ENCODE measurements at regions of chr4 and their contacts with region 1.

Region 1: GRCh38 chr4:26459054-26459755 is 31.1 kb downstream of the CCKAR start:
- DNase-seq: no peak
- H3K4me3 ChIP-seq: no peak overlapping the region
- H3K27ac ChIP-seq: peak overlapping the region; percentile 28 to 74 (median 48)
- H3K4me1 ChIP-seq: peaks cover 0 to 67% (median 50%) of the 10 kb centered on the region in 4 donors
- H3K27me3 ChIP-seq: no peaks in the 10 kb centered on the region
- CTCF ChIP-seq: peak in 3 of 4 experiments; percentile 11 to 59 (median 43)
- EP300 ChIP-seq: no peak
- POLR2A ChIP-seq: no peak

Region 2: GRCh38 chr4:26484032-26484515 is 24.9 kb after region 1 on chr4:
- intact Hi-C with region 1: loop called (anchors 2 kb)
- DNase-seq: peak; percentile 72
- H3K4me3 ChIP-seq: no peak overlapping the region
- H3K27ac ChIP-seq: peak overlapping the region in 3 of 4 donors; percentile 46 to 83 (median 80)
- H3K4me1 ChIP-seq: peaks cover 0 to 60% (median 32%) of the 10 kb centered on the region in 4 donors
- H3K27me3 ChIP-seq: no peaks in the 10 kb centered on the region
- CTCF ChIP-seq: no peak
- EP300 ChIP-seq: peak; percentile 72 to 92 (median 79)
- POLR2A ChIP-seq: no peak

Region 3: GRCh38 chr4:26557164-26557563 is 98.0 kb after region 1 on chr4:
- intact Hi-C with region 1: no loop called
- DNase-seq: no peak
- H3K4me3 ChIP-seq: no peak overlapping the region
- H3K27ac ChIP-seq: peak overlapping the region in 1 of 4 donors; percentile 20
- H3K4me1 ChIP-seq: peaks cover 0 to 16% (median 13%) of the 10 kb centered on the region in 4 donors
- H3K27me3 ChIP-seq: no peaks in the 10 kb centered on the region
- CTCF ChIP-seq: no peak
- EP300 ChIP-seq: no peak
- POLR2A ChIP-seq: no peak

Region 4: GRCh38 chr4:26583865-26584652 is 124.9 kb after region 1 on chr4 and contains the start of gene TBC1D19:
- intact Hi-C with region 1: loop called (anchors 10 kb)
- DNase-seq: peak; percentile 95
- H3K4me3 ChIP-seq: peak within 1 kb of the TSS; percentile 61 to 73 (median 70)
- H3K27ac ChIP-seq: peak within 1 kb of the TSS; percentile 74 to 80 (median 79)
- H3K4me1 ChIP-seq: peaks cover 0 to 21% (median 13%) of the 10 kb centered on the region in 4 donors
- H3K27me3 ChIP-seq: no peaks in the 10 kb centered on the region
- CTCF ChIP-seq: no peak
- EP300 ChIP-seq: no peak
- POLR2A ChIP-seq: no peak
- total RNA-seq, gene TBC1D19: 21.6 to 31.8 (median 27.2) TPM

Region 5: DNA sequence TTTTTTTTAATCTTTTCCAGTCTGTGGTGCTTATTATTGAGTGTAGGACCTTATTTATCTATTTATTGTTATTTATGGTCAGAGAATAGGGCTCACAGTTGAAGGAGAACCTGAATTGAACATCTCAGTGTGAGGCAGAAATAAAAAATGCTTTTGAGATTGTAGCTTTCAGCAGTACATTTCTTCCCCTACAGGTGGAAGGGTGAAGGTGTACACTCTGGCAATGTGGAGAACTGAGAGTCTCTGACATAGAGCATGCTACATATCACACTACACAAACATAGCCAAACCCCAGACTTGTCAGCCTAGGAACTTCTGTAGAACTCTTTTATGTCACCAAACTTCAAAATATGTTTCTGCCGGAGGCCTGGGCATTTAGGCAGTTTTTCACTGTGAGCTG is 541.6 kb after region 1 on chr4:
- intact Hi-C with region 1: loop called (anchors 10 kb)
- DNase-seq: no peak
- H3K4me3 ChIP-seq: no peak overlapping the region
- H3K27ac ChIP-seq: no peak overlapping the region
- H3K4me1 ChIP-seq: peaks cover 0 to 27% (median 12%) of the 10 kb centered on the region in 4 donors
- H3K27me3 ChIP-seq: no peaks in the 10 kb centered on the region
- CTCF ChIP-seq: no peak
- EP300 ChIP-seq: no peak
- POLR2A ChIP-seq: no peak

Measured in sigmoid colon (tissue), 7 donors.